Ascending aorta (tissue), 2 donors: ENCODE measurements at regions of chr16 and their contacts with region 1.

Region 1: GRCh38 chr16:3945751-3946603 is 65.5 kb upstream of the CREBBP start:
- DNase-seq: peak in 1 of 2 donors; percentile 88
- H3K4me3 ChIP-seq: peak overlapping the region in 1 of 2 donors; percentile 21
- H3K27ac ChIP-seq: peak overlapping the region; percentile 81 to 82
- H3K4me1 ChIP-seq: peaks cover 0 to 10% of the 10 kb centered on the region in 2 donors
- H3K27me3 ChIP-seq: no peaks in the 10 kb centered on the region
- CTCF ChIP-seq: no peak

Region 2: GRCh38 chr16:3880623-3881498 is 65.1 kb before region 1 on chr16 and contains the start of gene CREBBP:
- intact Hi-C with region 1: loop called (anchors 5 kb)
- DNase-seq: peak; percentile 27 to 91
- H3K4me3 ChIP-seq: peak within 1 kb of the TSS; percentile 78 to 100
- H3K27ac ChIP-seq: peak within 1 kb of the TSS; percentile 79 to 92
- H3K4me1 ChIP-seq: peaks cover 17 to 20% of the 10 kb centered on the region in 2 donors
- H3K27me3 ChIP-seq: no peaks in the 10 kb centered on the region
- CTCF ChIP-seq: no peak
- total RNA-seq, gene CREBBP: 73.7 TPM

Region 3: DNA sequence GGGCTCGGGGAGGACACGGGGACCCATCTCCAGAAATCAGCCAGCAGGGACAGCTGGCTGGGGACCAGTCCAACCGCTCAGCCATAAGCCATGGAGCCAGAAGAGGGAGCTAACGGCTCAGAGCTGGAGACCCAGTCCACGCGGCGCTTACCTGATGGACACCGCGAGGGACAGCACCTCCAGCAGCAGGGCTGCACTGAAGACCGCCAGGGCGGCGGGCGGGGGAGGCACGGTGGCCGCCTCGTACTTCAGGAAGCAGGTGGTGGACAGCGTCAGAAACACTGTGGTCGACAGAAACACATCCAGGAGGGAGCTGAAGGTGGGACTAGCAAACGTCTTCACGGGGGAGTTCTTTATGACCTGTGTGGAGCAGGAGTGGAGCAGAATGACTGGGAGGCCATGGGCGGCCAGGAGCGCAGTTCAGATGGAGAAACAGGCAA is 37.1 kb after region 1 on chr16:
- intact Hi-C with region 1: no loop called
- DNase-seq: peak in 1 of 2 donors; percentile 79
- H3K4me3 ChIP-seq: no peak overlapping the region
- H3K27ac ChIP-seq: no peak overlapping the region
- H3K4me1 ChIP-seq: no peaks in the 10 kb centered on the region
- H3K27me3 ChIP-seq: no peaks in the 10 kb centered on the region
- CTCF ChIP-seq: peak; percentile 59 to 70 (median 67)

Region 4: DNA sequence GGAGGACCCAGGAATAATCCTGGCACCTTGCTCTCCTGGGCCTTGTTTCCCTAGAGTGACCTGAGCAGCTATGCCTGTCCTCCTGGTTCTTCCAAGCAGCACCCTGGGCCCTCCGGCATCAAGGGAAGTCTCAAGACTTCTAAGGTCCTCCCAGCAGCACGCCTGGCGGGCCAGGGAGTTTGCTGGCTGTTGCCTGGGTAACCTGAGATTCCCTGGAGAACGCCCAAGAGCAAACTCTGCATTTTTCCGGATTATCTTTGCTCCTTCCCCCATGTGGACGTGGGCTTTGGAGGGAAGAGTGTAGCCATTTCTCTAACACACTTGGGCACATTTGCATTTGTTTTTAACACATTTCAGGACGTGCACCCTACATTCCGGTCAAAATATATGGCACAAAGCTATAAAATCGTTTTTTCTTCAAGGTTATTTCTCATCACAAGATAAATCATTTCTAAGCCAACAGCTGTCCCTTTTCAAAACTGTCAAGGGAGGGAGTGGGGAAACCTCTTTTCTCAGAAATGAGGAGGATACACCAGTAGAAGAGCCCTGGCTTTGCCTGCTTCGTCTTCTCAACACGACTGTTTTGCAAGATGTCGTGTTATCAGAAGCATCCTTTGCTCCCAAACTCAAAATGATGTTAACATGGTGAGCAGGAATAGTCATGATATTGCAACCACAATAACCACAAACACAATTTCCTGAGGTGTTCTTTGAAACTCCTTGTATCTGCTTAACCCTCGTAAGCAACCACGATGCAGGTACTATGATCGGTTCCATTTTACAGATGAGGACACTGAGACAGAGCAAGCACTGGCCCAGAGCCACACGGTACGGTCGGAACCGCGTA is 53.7 kb after region 1 on chr16:
- intact Hi-C with region 1: no loop called
- DNase-seq: peak in 1 of 2 donors; percentile 77
- H3K4me3 ChIP-seq: no peak overlapping the region
- H3K27ac ChIP-seq: peak overlapping the region; percentile 21 to 27
- H3K4me1 ChIP-seq: peaks cover 4 to 18% of the 10 kb centered on the region in 2 donors
- H3K27me3 ChIP-seq: no peaks in the 10 kb centered on the region
- CTCF ChIP-seq: no peak

Region 5: GRCh38 chr16:4011225-4011939 is 65.4 kb after region 1 on chr16:
- intact Hi-C with region 1: loop called (anchors 5 kb)
- DNase-seq: no peak
- H3K4me3 ChIP-seq: no peak overlapping the region
- H3K27ac ChIP-seq: peak overlapping the region in 1 of 2 donors; percentile 38
- H3K4me1 ChIP-seq: peaks cover 4 to 14% of the 10 kb centered on the region in 2 donors
- H3K27me3 ChIP-seq: no peaks in the 10 kb centered on the region
- CTCF ChIP-seq: no peak

Region 6: GRCh38 chr16:4053301-4053845 is 107.4 kb after region 1 on chr16:
- intact Hi-C with region 1: loop called (anchors 5 kb)
- DNase-seq: peak; percentile 27 to 91
- H3K4me3 ChIP-seq: peak overlapping the region; percentile 35 to 50
- H3K27ac ChIP-seq: peak overlapping the region; percentile 48 to 75
- H3K4me1 ChIP-seq: peaks cover 3 to 15% of the 10 kb centered on the region in 2 donors
- H3K27me3 ChIP-seq: no peaks in the 10 kb centered on the region
- CTCF ChIP-seq: no peak

Region 7: DNA sequence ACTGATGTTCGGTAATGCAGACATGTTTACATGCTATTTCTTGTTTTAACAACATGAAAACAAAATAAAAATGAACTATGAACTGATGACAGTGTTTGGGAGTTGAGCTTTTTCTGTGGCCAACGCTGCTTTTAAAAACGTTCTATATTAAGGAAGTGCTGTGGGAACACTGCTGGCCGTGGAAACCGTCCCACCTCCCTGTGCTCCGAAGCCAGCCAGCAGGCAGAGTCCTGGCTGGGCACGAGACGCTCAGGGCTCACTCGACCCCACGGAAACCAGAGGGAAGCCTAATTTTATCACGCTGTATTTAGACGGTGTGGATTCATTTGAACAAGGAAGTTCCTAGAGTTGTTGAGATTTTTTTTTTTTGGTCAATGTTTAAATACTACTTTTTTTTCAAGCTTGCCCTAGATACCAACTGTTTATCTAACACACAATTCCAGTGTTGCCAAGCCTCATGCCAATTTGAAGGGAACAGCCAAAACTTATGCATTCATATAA is 144.4 kb after region 1 on chr16:
- intact Hi-C with region 1: loop called (anchors 5 kb)
- DNase-seq: peak in 1 of 2 donors; percentile 84
- H3K4me3 ChIP-seq: peak overlapping the region; percentile 8 to 46
- H3K27ac ChIP-seq: peak overlapping the region; percentile 69 to 90
- H3K4me1 ChIP-seq: peaks cover 19 to 51% of the 10 kb centered on the region in 2 donors
- H3K27me3 ChIP-seq: no peaks in the 10 kb centered on the region
- CTCF ChIP-seq: no peak

Region 8: GRCh38 chr16:4253394-4254150 is 307.6 kb after region 1 on chr16:
- intact Hi-C with region 1: loop called (anchors 5 kb)
- DNase-seq: peak; percentile 99 to 100
- H3K4me3 ChIP-seq: peak overlapping the region; percentile 63 to 65
- H3K27ac ChIP-seq: peak overlapping the region; percentile 90 to 91
- H3K4me1 ChIP-seq: no peaks in the 10 kb centered on the region
- H3K27me3 ChIP-seq: no peaks in the 10 kb centered on the region
- CTCF ChIP-seq: no peak

Region 9: GRCh38 chr16:4330277-4330874 is 384.4 kb after region 1 on chr16:
- intact Hi-C with region 1: loop called (anchors 10 kb)
- DNase-seq: peak in 1 of 2 donors; percentile 91
- H3K4me3 ChIP-seq: no peak overlapping the region
- H3K27ac ChIP-seq: peak overlapping the region; percentile 21 to 94
- H3K4me1 ChIP-seq: peaks cover 27 to 39% of the 10 kb centered on the region in 2 donors
- H3K27me3 ChIP-seq: no peaks in the 10 kb centered on the region
- CTCF ChIP-seq: peak; percentile 89 to 97 (median 95)